ENCODE measurements at regions of chr19 and their contacts with region 1.

Region 1: DNA sequence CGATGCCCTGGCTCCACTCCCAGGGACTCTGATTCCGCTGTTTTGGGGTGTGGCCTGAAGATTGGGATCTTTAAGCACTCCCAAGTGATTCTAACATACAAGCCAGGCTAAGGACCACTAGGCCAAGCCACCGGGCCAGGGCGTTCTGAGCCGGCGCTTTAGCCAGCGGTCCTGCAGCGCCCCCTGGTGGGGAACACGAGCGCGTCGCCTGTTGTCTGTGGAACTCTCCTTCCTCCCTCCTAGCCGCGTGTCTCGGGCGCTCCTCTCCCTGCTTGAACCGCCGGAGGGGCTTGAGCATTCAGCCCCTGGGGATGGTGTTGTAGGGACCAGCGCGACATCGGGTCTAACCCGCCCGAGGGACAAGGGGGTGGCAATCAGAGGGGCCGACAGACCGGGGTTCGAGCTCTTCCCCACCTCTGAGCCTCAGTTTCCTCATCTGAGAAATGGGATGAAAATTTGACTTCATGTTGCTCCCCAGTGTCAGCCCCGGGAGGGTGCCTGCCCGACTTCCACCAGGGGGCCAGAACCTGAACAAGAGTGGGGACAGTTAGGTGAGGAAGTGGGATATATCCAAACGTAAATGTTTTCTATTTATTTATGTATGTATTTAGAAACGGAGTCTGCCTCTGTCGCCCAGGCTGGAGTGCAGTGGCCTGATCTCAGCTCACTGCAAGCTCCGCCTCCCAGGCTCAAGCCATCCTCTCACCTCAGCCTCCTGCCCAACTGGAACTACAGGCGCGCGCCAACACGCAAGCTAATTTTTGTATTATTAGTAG is 18.0 kb upstream of the PNMA8B start:
- DNase-seq: peak; percentile 62
- ATAC-seq: peak; percentile 92
- H3K4me3 ChIP-seq: no peak overlapping the region
- H3K27ac ChIP-seq: no peak overlapping the region
- H3K4me1 ChIP-seq: peaks cover 0 to 10% of the 10 kb centered on the region in 2 experiments; a peak in 2 of 4 replicates
- H3K27me3 ChIP-seq: no peaks in the 10 kb centered on the region
- CTCF ChIP-seq: peak; percentile 94 to 98 (median 94)
- POLR2A ChIP-seq: no peak
- RAD21 ChIP-seq: peak; percentile 96

Region 2: GRCh38 chr19:46287585-46287984 is 226.1 kb before region 1 on chr19:
- CTCF ChIA-PET with region 1: interaction called, 12 read pairs
- POLR2A ChIA-PET with region 1: no interaction called
- RAD21 ChIA-PET with region 1: no interaction called
- intact Hi-C with region 1: no loop called
- DNase-seq: no peak
- ATAC-seq: peak; percentile 40; the same call in 1 of the 2 replicates
- H3K4me3 ChIP-seq: no peak overlapping the region
- H3K27ac ChIP-seq: no peak overlapping the region
- H3K4me1 ChIP-seq: peaks cover 0 to 9% of the 10 kb centered on the region in 2 experiments; a peak in 2 of 4 replicates
- H3K27me3 ChIP-seq: no peaks in the 10 kb centered on the region
- CTCF ChIP-seq: no peak
- POLR2A ChIP-seq: no peak
- RAD21 ChIP-seq: no peak

Region 3: GRCh38 chr19:46392243-46392801 is 121.3 kb before region 1 on chr19:
- CTCF ChIA-PET with region 1: interaction called, 18 read pairs
- POLR2A ChIA-PET with region 1: no interaction called
- RAD21 ChIA-PET with region 1: interaction called in 1 of 2 experiments, 5 read pairs
- intact Hi-C with region 1: loop called (anchors 1 kb)
- DNase-seq: no peak
- ATAC-seq: no peak
- H3K4me3 ChIP-seq: no peak overlapping the region
- H3K27ac ChIP-seq: no peak overlapping the region
- H3K4me1 ChIP-seq: peaks cover 4 to 11% of the 10 kb centered on the region in 2 experiments; a peak in 1 of 4 replicates
- H3K27me3 ChIP-seq: no peaks in the 10 kb centered on the region
- CTCF ChIP-seq: no peak
- POLR2A ChIP-seq: no peak
- RAD21 ChIP-seq: no peak

Region 4: DNA sequence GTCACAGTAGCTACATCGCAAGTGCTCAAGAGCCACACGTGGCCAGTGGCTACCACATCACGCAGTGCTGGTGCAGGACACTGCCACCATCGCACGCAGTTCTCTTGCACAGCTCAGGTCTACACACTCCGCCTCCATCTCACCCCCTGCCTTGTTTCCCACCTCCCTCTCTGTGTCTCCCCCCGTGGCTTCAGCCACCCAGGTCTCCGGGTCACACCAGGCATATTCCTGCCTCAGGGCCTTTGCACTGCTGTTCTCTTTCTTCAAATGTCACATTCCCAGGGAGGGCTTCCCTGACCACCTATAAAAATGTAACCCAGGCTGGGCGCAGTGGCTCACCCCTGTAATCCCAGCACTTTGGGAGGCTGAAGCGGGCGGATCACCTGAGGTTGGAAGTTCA is 110.9 kb before region 1 on chr19:
- CTCF ChIA-PET with region 1: interaction called, 18 read pairs
- POLR2A ChIA-PET with region 1: no interaction called
- RAD21 ChIA-PET with region 1: interaction called in 1 of 2 experiments, 4 read pairs
- intact Hi-C with region 1: loop called (anchors 1 kb)
- DNase-seq: no peak
- ATAC-seq: no peak
- H3K4me3 ChIP-seq: no peak overlapping the region
- H3K27ac ChIP-seq: no peak overlapping the region
- H3K4me1 ChIP-seq: no peaks in the 10 kb centered on the region
- H3K27me3 ChIP-seq: no peaks in the 10 kb centered on the region
- CTCF ChIP-seq: no peak
- POLR2A ChIP-seq: no peak
- RAD21 ChIP-seq: no peak